ENCODE measurements at regions of chr21 and their contacts with region 1.

Region 1: GRCh38 chr21:36113647-36114428 is 21.0 kb upstream of the CBR3 start:
- DNase-seq: peak in 8 of 9 donors; percentile 49 to 90 (median 74)
- ATAC-seq: peak; percentile 92
- H3K4me3 ChIP-seq: peak overlapping the region; percentile 64
- H3K4me3 Mint-ChIP-seq: peak overlapping the region; percentile 67 to 100 (median 88)
- H3K27ac ChIP-seq: peak overlapping the region; percentile 72
- H3K27ac Mint-ChIP-seq: peak overlapping the region; percentile 85 to 98 (median 92)
- H3K4me1 ChIP-seq: peaks cover 0 to 19% of the 10 kb centered on the region in 2 donors
- H3K4me1 Mint-ChIP-seq: peaks cover 16 to 45% (median 28%) of the 10 kb centered on the region in 7 donors
- H3K27me3 ChIP-seq: no peaks in the 10 kb centered on the region
- H3K27me3 Mint-ChIP-seq: peaks cover 0 to 10% (median 0%) of the 10 kb centered on the region in 5 donors

Region 2: GRCh38 chr21:34693192-34693810 is 1420.5 kb before region 1 on chr21:
- CTCF ChIA-PET with region 1: no interaction called
- POLR2A ChIA-PET with region 1: no interaction called
- intact Hi-C with region 1: loop called in 1 of 2 experiments (anchors 1 kb)
- DNase-seq: peak in 7 of 9 donors; percentile 33 to 63 (median 58)
- ATAC-seq: peak; percentile 72
- H3K4me3 ChIP-seq: no peak overlapping the region
- H3K4me3 Mint-ChIP-seq: no peak overlapping the region
- H3K27ac ChIP-seq: no peak overlapping the region
- H3K27ac Mint-ChIP-seq: no peak overlapping the region
- H3K4me1 ChIP-seq: no peaks in the 10 kb centered on the region
- H3K4me1 Mint-ChIP-seq: peaks cover 0 to 10% (median 3%) of the 10 kb centered on the region in 7 donors
- H3K27me3 ChIP-seq: peaks cover 0 to 4% of the 10 kb centered on the region in 2 donors
- H3K27me3 Mint-ChIP-seq: peaks cover 2 to 43% (median 10%) of the 10 kb centered on the region in 5 donors

Region 3: DNA sequence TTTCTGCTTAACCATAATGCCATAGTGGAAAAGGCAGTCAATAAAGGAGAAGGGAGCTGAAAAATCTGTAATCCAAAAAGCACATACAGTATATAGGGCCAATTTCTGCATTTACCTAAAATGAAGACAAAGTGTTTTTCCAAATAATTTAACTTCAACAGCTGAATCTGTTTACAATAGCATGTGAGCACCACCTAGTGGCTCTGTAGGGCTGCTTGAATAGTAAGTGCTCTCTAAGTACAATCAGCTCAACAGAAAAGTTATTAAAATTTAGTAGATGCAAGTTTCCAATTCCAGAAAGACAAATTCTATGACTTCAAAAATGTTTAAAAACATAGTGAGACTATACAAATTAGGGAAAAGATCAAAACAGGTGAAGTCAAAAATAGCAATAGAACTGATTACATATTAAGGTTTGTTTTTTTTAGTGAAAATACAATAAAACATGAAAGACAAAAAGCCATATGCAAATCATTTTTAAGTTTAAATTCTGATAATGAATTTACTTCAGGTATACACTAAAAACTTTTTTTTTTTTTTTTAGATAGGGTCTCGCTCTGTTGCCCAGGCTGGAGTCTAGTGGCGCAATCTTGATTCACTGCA is 273.5 kb before region 1 on chr21:
- CTCF ChIA-PET with region 1: interaction called, 3 read pairs
- POLR2A ChIA-PET with region 1: no interaction called
- intact Hi-C with region 1: loop called (anchors 1 to 5 kb)
- DNase-seq: peak in 7 of 9 donors; percentile 30 to 69 (median 52)
- ATAC-seq: peak; percentile 69
- H3K4me3 ChIP-seq: no peak overlapping the region
- H3K4me3 Mint-ChIP-seq: no peak overlapping the region
- H3K27ac ChIP-seq: no peak overlapping the region
- H3K27ac Mint-ChIP-seq: no peak overlapping the region
- H3K4me1 ChIP-seq: peaks cover 0 to 4% of the 10 kb centered on the region in 2 donors
- H3K4me1 Mint-ChIP-seq: peaks cover 0 to 18% (median 5%) of the 10 kb centered on the region in 7 donors
- H3K27me3 ChIP-seq: no peaks in the 10 kb centered on the region
- H3K27me3 Mint-ChIP-seq: peaks cover 0 to 6% (median 0%) of the 10 kb centered on the region in 5 donors

Region 4: DNA sequence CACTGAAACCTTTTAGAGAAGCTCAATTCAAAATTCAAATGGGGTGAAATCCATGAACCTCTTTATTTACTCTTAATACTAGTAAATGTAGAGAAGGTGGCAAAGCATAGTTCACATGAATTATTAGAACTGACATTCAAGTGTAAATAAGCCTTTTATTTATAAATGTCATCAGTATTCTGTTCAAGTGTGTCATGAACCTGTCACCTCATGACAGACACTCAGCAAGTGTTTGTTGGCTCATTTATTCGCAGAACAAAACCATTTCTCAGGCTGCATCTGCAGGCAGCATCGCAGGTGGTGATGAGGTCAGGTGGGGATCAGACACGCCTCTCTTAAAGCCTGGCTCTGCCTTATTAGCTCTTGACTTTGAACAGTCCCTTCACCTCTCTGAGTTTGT is 170.1 kb before region 1 on chr21:
- CTCF ChIA-PET with region 1: no interaction called
- POLR2A ChIA-PET with region 1: no interaction called
- intact Hi-C with region 1: no loop called
- DNase-seq: no peak
- ATAC-seq: no peak
- H3K4me3 ChIP-seq: no peak overlapping the region
- H3K4me3 Mint-ChIP-seq: no peak overlapping the region
- H3K27ac ChIP-seq: no peak overlapping the region
- H3K27ac Mint-ChIP-seq: no peak overlapping the region
- H3K4me1 ChIP-seq: no peaks in the 10 kb centered on the region
- H3K4me1 Mint-ChIP-seq: peaks cover 0 to 1% (median 0%) of the 10 kb centered on the region in 7 donors
- H3K27me3 ChIP-seq: no peaks in the 10 kb centered on the region
- H3K27me3 Mint-ChIP-seq: peaks cover 0 to 11% (median 6%) of the 10 kb centered on the region in 5 donors

Region 5: GRCh38 chr21:36028127-36029069 is 85.4 kb before region 1 on chr21:
- CTCF ChIA-PET with region 1: interaction called, 4 read pairs
- POLR2A ChIA-PET with region 1: no interaction called
- intact Hi-C with region 1: loop called (anchors 1 to 2 kb)
- DNase-seq: peak; percentile 39 to 73 (median 62)
- ATAC-seq: peak; percentile 87
- H3K4me3 ChIP-seq: no peak overlapping the region
- H3K4me3 Mint-ChIP-seq: peak overlapping the region in 2 of 10 donors; percentile 22 to 25
- H3K27ac ChIP-seq: no peak overlapping the region
- H3K27ac Mint-ChIP-seq: no peak overlapping the region
- H3K4me1 ChIP-seq: peaks cover 0 to 4% of the 10 kb centered on the region in 2 donors
- H3K4me1 Mint-ChIP-seq: peaks cover 4 to 10% (median 5%) of the 10 kb centered on the region in 7 donors
- H3K27me3 ChIP-seq: no peaks in the 10 kb centered on the region
- H3K27me3 Mint-ChIP-seq: no peaks in the 10 kb centered on the region

Region 6: DNA sequence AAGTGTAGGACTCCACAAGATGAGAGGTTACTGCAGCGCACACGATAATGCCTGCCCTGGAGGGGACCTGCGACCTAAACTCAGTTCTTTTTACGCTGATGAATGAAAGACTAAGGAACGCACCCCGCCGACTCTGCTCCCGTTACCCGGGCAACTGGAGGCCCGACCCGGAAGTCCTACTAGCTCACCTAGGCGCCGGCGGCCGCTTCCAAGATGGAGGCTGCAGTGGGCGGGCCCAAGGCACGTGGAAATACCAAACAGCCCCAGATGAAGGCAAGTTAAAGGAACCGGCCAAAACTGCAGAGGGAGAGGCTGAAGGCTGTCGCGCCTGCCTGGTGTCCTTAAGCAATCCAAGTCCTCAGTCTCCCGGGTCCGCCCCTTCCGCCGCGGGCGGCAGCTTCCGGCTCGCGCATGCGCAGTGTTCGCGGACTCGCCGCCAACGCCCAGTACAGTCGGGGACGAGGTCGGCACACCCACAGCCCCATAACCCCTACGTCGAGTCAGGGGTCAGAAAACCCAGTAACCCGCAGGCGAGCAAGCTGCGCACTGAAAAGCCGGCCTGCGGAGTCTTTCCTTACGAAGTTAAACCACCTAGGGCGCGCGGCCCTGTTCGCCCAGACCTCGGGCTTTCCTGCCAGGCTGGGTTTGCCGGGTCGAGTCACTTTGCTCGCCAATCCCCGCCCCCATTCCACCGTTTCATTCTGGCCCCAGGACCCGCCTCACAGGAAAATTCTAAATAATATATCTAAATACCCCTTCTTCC is 53.5 kb before region 1 on chr21 and contains the start of gene SETD4:
- CTCF ChIA-PET with region 1: interaction called, 5 read pairs
- POLR2A ChIA-PET with region 1: interaction called, 30 read pairs
- intact Hi-C with region 1: loop called (anchors 1 kb)
- DNase-seq: peak; percentile 91 to 97 (median 94)
- ATAC-seq: peak; percentile 93
- H3K4me3 ChIP-seq: peak within 1 kb of the TSS; percentile 80
- H3K4me3 Mint-ChIP-seq: peak within 1 kb of the TSS; percentile 88 to 98 (median 96)
- H3K27ac ChIP-seq: peak within 1 kb of the TSS; percentile 89
- H3K27ac Mint-ChIP-seq: peak within 1 kb of the TSS; percentile 96 to 98 (median 97)
- H3K4me1 ChIP-seq: no peaks in the 10 kb centered on the region
- H3K4me1 Mint-ChIP-seq: peaks cover 2 to 38% (median 24%) of the 10 kb centered on the region in 7 donors
- H3K27me3 ChIP-seq: no peaks in the 10 kb centered on the region
- H3K27me3 Mint-ChIP-seq: peaks cover 0 to 4% (median 0%) of the 10 kb centered on the region in 5 donors
- total RNA-seq, gene SETD4: 17.1 to 31.5 (median 20.9) TPM

Region 7: DNA sequence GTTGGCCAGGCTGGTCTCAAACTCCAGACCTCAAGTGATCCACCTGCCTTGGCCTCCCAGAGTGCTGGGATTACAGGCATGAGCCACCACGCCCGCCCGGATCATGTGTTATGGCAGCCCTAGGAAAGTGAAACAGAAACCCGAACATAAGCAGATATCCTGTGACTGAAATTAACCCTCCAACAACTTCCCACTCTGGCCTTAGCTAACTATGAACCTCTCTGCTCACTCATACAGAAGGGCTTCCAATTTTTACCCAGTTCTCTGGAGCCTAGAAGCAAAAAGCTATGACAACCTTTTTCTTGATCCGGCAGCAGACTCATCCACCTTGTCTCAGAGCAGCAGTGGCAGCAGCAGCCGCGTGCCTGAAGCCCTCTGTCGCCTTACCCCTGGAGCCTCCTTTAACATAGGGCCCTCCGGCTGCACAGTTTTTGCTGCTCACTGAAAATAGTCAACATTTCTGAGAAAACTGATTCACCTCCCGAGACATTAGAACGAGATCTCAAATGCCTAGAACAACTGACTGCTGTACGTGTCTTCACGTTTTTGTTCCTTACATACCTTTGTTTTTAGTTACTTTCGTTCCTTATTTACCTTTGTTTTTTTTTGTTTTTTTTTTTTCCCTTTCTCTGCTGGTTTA is 34.7 kb before region 1 on chr21:
- CTCF ChIA-PET with region 1: interaction called, 3 read pairs
- POLR2A ChIA-PET with region 1: no interaction called
- intact Hi-C with region 1: loop called in 1 of 2 experiments (anchors 2 kb)
- DNase-seq: peak in 7 of 9 donors; percentile 37 to 66 (median 51)
- ATAC-seq: peak; percentile 74
- H3K4me3 ChIP-seq: peak overlapping the region; percentile 44
- H3K4me3 Mint-ChIP-seq: peak overlapping the region; percentile 46 to 93 (median 81)
- H3K27ac ChIP-seq: peak overlapping the region; percentile 66
- H3K27ac Mint-ChIP-seq: peak overlapping the region; percentile 71 to 99 (median 97)
- H3K4me1 ChIP-seq: peaks cover 0 to 10% of the 10 kb centered on the region in 2 donors
- H3K4me1 Mint-ChIP-seq: peaks cover 8 to 42% (median 34%) of the 10 kb centered on the region in 7 donors
- H3K27me3 ChIP-seq: no peaks in the 10 kb centered on the region
- H3K27me3 Mint-ChIP-seq: no peaks in the 10 kb centered on the region

Region 8: GRCh38 chr21:37398697-37399096 is 1284.9 kb after region 1 on chr21:
- CTCF ChIA-PET with region 1: no interaction called
- POLR2A ChIA-PET with region 1: no interaction called
- intact Hi-C with region 1: no loop called
- DNase-seq: peak in 7 of 9 donors; percentile 45 to 68 (median 57)
- ATAC-seq: peak; percentile 77
- H3K4me3 ChIP-seq: no peak overlapping the region
- H3K4me3 Mint-ChIP-seq: peak overlapping the region; percentile 63 to 83 (median 74)
- H3K27ac ChIP-seq: peak overlapping the region; percentile 14
- H3K27ac Mint-ChIP-seq: peak overlapping the region; percentile 5 to 86 (median 72)
- H3K4me1 ChIP-seq: peaks cover 36 to 54% of the 10 kb centered on the region in 2 donors
- H3K4me1 Mint-ChIP-seq: peaks cover 59 to 100% (median 83%) of the 10 kb centered on the region in 7 donors
- H3K27me3 ChIP-seq: no peaks in the 10 kb centered on the region
- H3K27me3 Mint-ChIP-seq: no peaks in the 10 kb centered on the region